B cell (primary cell): ENCODE measurements at regions of chr2 and their contacts with region 1.

Region 1: DNA sequence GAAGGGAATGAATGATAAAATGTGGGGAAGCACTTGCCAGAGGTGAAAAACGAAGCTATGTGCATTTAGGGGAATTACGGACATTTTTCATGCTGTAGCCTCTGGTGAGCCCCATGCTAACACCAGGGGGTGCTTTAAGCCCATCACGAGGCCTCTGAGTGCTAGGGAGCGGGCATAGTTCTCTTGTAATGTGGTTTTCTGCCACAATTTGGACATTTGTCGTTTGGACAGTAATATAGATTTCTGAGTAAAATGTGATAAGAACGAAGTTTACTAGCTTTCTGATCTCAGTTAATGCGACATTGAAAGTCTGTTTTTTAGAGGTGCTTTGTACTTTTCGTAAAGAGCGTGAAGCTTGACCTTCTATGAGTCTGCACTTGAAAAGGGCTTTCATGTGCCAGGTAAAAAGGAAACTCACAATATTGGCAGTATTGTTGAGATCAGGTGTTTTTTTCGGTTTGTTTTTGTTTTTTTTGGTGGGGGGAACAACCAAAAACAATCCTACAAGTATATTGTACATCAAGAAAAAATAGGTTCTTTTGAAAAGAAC is 50.6 kb downstream of the TRAF3IP1 start:
- DNase-seq: peak; percentile 46
- ATAC-seq: no peak
- H3K4me3 ChIP-seq: no peak overlapping the region
- H3K4me3 Mint-ChIP-seq: no peak overlapping the region
- H3K27ac ChIP-seq: no peak overlapping the region
- H3K27ac Mint-ChIP-seq: no peak overlapping the region
- H3K4me1 ChIP-seq: no peaks in the 10 kb centered on the region
- H3K4me1 Mint-ChIP-seq: no peaks in the 10 kb centered on the region
- H3K27me3 ChIP-seq: no peaks in the 10 kb centered on the region
- H3K27me3 Mint-ChIP-seq: no peaks in the 10 kb centered on the region
- CTCF ChIP-seq: peak; percentile 32

Region 2: GRCh38 chr2:237895544-237896506 is 475.1 kb before region 1 on chr2:
- CTCF ChIA-PET with region 1: no interaction called
- POLR2A ChIA-PET with region 1: no interaction called
- intact Hi-C with region 1: no loop called
- DNase-seq: no peak
- ATAC-seq: no peak
- H3K4me3 ChIP-seq: no peak overlapping the region
- H3K4me3 Mint-ChIP-seq: no peak overlapping the region
- H3K27ac ChIP-seq: no peak overlapping the region
- H3K27ac Mint-ChIP-seq: no peak overlapping the region
- H3K4me1 ChIP-seq: peaks cover 10 to 18% of the 10 kb centered on the region in 2 donors
- H3K4me1 Mint-ChIP-seq: peaks cover 43% of the 10 kb centered on the region
- H3K27me3 ChIP-seq: no peaks in the 10 kb centered on the region
- H3K27me3 Mint-ChIP-seq: no peaks in the 10 kb centered on the region
- CTCF ChIP-seq: no peak

Region 3: GRCh38 chr2:238158527-238159070 is 212.3 kb before region 1 on chr2 and contains the start of gene ERFE:
- CTCF ChIA-PET with region 1: no interaction called
- POLR2A ChIA-PET with region 1: no interaction called
- intact Hi-C with region 1: no loop called
- DNase-seq: peak; percentile 69
- ATAC-seq: peak; percentile 78
- H3K4me3 ChIP-seq: peak within 1 kb of the TSS in 2 of 5 experiments; percentile 30
- H3K4me3 Mint-ChIP-seq: peak within 1 kb of the TSS; percentile 84
- H3K27ac ChIP-seq: no peak within 1 kb of the TSS
- H3K27ac Mint-ChIP-seq: no peak within 1 kb of the TSS
- H3K4me1 ChIP-seq: peaks cover 16 to 19% of the 10 kb centered on the region in 2 donors
- H3K4me1 Mint-ChIP-seq: peaks cover 15% of the 10 kb centered on the region
- H3K27me3 ChIP-seq: peaks cover 0 to 28% (median 8%) of the 10 kb centered on the region in 4 experiments
- H3K27me3 Mint-ChIP-seq: peaks cover 15% of the 10 kb centered on the region
- CTCF ChIP-seq: peak; percentile 62
- total RNA-seq, gene ERFE: 0.17 and 0.19 TPM in 2 replicates

Region 4: GRCh38 chr2:238462782-238463396 is 92.0 kb after region 1 on chr2:
- CTCF ChIA-PET with region 1: no interaction called
- POLR2A ChIA-PET with region 1: no interaction called
- intact Hi-C with region 1: loop called (anchors 2 kb)
- DNase-seq: peak; percentile 38
- ATAC-seq: peak; percentile 45
- H3K4me3 ChIP-seq: no peak overlapping the region
- H3K4me3 Mint-ChIP-seq: no peak overlapping the region
- H3K27ac ChIP-seq: no peak overlapping the region
- H3K27ac Mint-ChIP-seq: no peak overlapping the region
- H3K4me1 ChIP-seq: no peaks in the 10 kb centered on the region
- H3K4me1 Mint-ChIP-seq: peaks cover 5% of the 10 kb centered on the region
- H3K27me3 ChIP-seq: no peaks in the 10 kb centered on the region
- H3K27me3 Mint-ChIP-seq: no peaks in the 10 kb centered on the region
- CTCF ChIP-seq: peak; percentile 79